Activated T-helper 2 cell treated with anti-CD3 and anti-CD28 coated beads, Interferon-gamma antibody, Interleukin-2, Interleukin-4, amounts not matched to agents 10 μg/mL and 5 μg/mL and 100 μg/mL, durations not matched to agents 14 hours and 24 hours and 36 hours (primary cell): ENCODE measurements at regions of chr6 and their contacts with region 1.

Region 1: DNA sequence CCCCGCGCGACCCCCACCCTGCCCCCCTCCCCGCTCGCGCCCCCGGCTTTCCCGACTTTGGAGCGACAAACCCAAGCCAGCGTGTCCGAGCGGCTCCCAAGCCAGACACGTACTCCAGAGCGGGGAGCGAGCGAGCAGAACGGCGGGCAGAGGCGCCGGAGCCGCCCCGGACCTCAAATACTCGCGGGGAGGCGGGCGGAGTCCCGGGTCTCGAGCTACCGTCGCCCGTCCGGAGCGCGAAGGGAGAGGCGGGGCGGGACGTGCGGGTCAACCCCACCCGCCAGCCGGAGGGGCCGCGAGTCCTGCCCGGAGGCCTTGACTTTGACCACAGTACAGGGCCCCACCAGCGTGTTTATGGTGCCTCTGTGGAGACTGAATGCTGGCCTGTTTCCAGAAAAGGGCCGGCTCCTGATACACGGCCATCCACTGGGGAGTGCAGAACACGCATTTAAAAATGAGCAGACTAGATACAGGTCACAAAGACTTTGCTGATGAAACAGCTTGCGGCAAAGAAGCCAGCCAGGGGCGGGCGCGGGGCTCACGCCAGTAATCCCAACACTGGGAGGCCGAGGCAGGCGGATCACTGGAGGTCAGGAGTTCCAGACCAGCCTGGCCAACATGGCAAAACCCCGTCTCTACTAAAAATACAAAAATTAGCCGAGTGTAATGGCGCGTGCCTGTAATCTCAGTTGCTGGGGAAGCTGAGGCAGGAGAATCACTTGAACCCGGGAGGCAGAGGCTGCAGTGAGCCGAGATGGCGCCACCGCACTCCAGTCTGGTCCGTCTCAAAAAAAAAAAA is at the start of gene SERPINB6:
- DNase-seq: peak; percentile 22
- H3K4me3 Mint-ChIP-seq: peak within 1 kb of the TSS; percentile 83
- H3K27ac Mint-ChIP-seq: peak within 1 kb of the TSS; percentile 81
- H3K4me1 Mint-ChIP-seq: peaks cover 42% of the 10 kb centered on the region
- H3K27me3 Mint-ChIP-seq: peaks cover 11% of the 10 kb centered on the region
- total RNA-seq, gene SERPINB6: 72.0 and 73.0 TPM in 2 replicates

Region 2: DNA sequence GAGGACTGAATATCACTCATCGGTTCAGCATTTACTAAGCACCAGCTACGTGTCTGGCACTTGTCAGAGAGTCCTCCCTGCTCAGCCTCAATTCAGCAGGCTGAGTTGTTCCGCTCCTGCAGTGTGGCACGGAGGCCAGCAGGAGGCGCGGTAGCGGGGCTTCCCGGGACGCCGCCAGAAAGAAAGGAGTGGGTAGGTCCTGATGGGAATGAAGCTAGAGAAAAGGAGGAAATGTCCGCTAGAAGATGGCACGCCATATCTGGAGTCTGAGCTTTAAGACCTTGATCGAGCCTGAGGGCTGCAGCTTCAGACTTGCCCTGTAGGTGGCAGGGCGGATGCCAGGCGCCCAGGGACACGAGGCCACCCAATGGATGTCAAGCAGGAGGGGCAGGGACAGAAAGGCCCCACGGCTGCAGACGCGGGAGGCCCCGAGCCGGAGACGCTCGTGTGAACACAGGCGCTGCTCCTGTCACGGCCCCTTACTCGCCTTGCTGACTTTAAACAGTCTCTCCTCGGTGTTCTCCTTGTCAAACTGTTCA is 19.0 kb before region 1 on chr6:
- intact Hi-C with region 1: loop called (anchors 1 kb)
- DNase-seq: peak; percentile 53
- H3K4me3 Mint-ChIP-seq: peak overlapping the region; percentile 57
- H3K27ac Mint-ChIP-seq: peak overlapping the region; percentile 86
- H3K4me1 Mint-ChIP-seq: peaks cover 19% of the 10 kb centered on the region
- H3K27me3 Mint-ChIP-seq: no peaks in the 10 kb centered on the region

Region 3: DNA sequence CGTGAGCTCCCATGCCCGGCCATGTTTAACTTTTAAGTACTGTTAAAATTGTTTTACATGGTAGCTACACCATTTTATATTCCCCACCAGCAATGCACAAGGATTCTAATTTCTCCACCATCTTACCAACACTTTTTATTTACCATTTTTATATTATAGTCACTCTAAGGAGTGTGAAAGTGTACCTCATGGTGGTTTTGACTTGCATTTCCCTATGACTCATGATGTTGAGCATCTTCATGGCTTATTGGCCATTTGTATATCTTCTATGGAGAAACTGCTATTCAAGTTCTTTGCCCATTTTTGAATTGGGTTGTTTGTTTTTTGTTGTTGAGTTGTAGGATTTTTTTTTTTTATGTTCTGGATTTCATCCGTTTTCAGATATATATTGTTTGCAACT is 131.3 kb after region 1 on chr6:
- intact Hi-C with region 1: no loop called
- DNase-seq: no peak
- H3K4me3 Mint-ChIP-seq: no peak overlapping the region
- H3K27ac Mint-ChIP-seq: no peak overlapping the region
- H3K4me1 Mint-ChIP-seq: peaks cover 2% of the 10 kb centered on the region
- H3K27me3 Mint-ChIP-seq: no peaks in the 10 kb centered on the region